ENCODE measurements at regions of chr1 and their contacts with region 1.

Region 1: GRCh38 chr1:246689409-246690008 is 34.7 kb upstream of the SCCPDH start:
- DNase-seq: peak; percentile 34
- ATAC-seq: peak; percentile 99
- H3K4me3 ChIP-seq: peak overlapping the region; percentile 63; the same call in 1 of the 2 replicates
- H3K27ac ChIP-seq: no peak overlapping the region
- H3K4me1 ChIP-seq: no peaks in the 10 kb centered on the region
- H3K27me3 ChIP-seq: no peaks in the 10 kb centered on the region
- CTCF ChIP-seq: peak; percentile 84 to 91 (median 90)
- EP300 ChIP-seq: no peak
- POLR2A ChIP-seq: no peak
- RAD21 ChIP-seq: peak; percentile 82

Region 2: GRCh38 chr1:246724016-246724730 is 34.7 kb after region 1 on chr1 and contains the start of gene SCCPDH:
- CTCF ChIA-PET with region 1: interaction called, 11 read pairs
- POLR2A ChIA-PET with region 1: no interaction called
- RAD21 ChIA-PET with region 1: no interaction called
- SMC1A ChIA-PET with region 1: interaction called, 3 read pairs
- in situ Hi-C with region 1: no loop called
- intact Hi-C with region 1: no loop called
- DNase-seq: no peak
- ATAC-seq: peak; percentile 99
- H3K4me3 ChIP-seq: peak within 1 kb of the TSS; percentile 90
- H3K27ac ChIP-seq: peak within 1 kb of the TSS; percentile 61; the same call in 1 of the 2 replicates
- H3K4me1 ChIP-seq: no peaks in the 10 kb centered on the region
- H3K27me3 ChIP-seq: no peaks in the 10 kb centered on the region
- CTCF ChIP-seq: no peak
- EP300 ChIP-seq: no peak
- POLR2A ChIP-seq: peak; percentile 91
- RAD21 ChIP-seq: no peak
- polyA plus RNA-seq, gene SCCPDH: 5.4 to 14.2 TPM

Region 3: GRCh38 chr1:246934765-246935164 is 245.3 kb after region 1 on chr1:
- CTCF ChIA-PET with region 1: no interaction called
- POLR2A ChIA-PET with region 1: no interaction called
- RAD21 ChIA-PET with region 1: no interaction called
- SMC1A ChIA-PET with region 1: no interaction called
- in situ Hi-C with region 1: no loop called
- intact Hi-C with region 1: no loop called
- DNase-seq: no peak
- ATAC-seq: no peak
- H3K4me3 ChIP-seq: no peak overlapping the region
- H3K27ac ChIP-seq: no peak overlapping the region
- H3K4me1 ChIP-seq: no peaks in the 10 kb centered on the region
- H3K27me3 ChIP-seq: no peaks in the 10 kb centered on the region
- CTCF ChIP-seq: no peak
- EP300 ChIP-seq: no peak
- POLR2A ChIP-seq: no peak
- RAD21 ChIP-seq: no peak

Region 4: GRCh38 chr1:246971090-246971721 is 281.7 kb after region 1 on chr1:
- CTCF ChIA-PET with region 1: interaction called, 11 read pairs
- POLR2A ChIA-PET with region 1: no interaction called
- RAD21 ChIA-PET with region 1: no interaction called
- SMC1A ChIA-PET with region 1: no interaction called
- in situ Hi-C with region 1: no loop called
- intact Hi-C with region 1: no loop called
- DNase-seq: no peak
- ATAC-seq: peak; percentile 60; the same call in 2 of the 3 replicates
- H3K4me3 ChIP-seq: no peak overlapping the region
- H3K27ac ChIP-seq: no peak overlapping the region
- H3K4me1 ChIP-seq: no peaks in the 10 kb centered on the region
- H3K27me3 ChIP-seq: no peaks in the 10 kb centered on the region
- CTCF ChIP-seq: peak; percentile 62 to 91 (median 65)
- EP300 ChIP-seq: no peak
- POLR2A ChIP-seq: no peak
- RAD21 ChIP-seq: peak; percentile 92